ENCODE measurements at regions of chr9 and their contacts with region 1.

Region 1: DNA sequence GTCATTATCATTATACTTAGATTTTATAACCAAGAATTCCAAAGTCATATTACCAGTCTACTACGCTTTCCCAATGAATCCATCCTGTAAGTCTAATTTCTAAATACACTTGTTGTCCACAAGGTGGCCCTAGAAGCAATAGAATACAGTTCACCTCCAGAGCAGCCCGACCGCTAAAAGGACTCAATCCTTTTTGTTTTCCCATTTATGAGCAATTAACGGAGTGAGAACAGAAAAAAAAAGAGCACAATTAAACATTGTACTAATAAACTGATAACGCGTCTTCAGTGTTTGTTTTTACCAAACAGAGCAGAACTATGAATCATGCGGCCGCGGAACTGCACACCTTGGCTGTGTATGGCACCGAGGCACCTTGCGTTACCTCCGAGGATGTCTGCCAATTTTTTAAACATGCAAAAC is 160.7 kb upstream of the DAPK1 start:
- DNase-seq: peak; percentile 10
- ATAC-seq: peak; percentile 78; the same call in 1 of the 2 replicates
- H3K4me3 ChIP-seq: peak overlapping the region; percentile 13 to 14; a peak in 2 of 4 replicates
- H3K27ac ChIP-seq: no peak overlapping the region
- H3K4me1 ChIP-seq: no peaks in the 10 kb centered on the region
- H3K27me3 ChIP-seq: no peaks in the 10 kb centered on the region; the same call in 1 of the 2 replicates
- CTCF ChIP-seq: peak; percentile 60

Region 2: DNA sequence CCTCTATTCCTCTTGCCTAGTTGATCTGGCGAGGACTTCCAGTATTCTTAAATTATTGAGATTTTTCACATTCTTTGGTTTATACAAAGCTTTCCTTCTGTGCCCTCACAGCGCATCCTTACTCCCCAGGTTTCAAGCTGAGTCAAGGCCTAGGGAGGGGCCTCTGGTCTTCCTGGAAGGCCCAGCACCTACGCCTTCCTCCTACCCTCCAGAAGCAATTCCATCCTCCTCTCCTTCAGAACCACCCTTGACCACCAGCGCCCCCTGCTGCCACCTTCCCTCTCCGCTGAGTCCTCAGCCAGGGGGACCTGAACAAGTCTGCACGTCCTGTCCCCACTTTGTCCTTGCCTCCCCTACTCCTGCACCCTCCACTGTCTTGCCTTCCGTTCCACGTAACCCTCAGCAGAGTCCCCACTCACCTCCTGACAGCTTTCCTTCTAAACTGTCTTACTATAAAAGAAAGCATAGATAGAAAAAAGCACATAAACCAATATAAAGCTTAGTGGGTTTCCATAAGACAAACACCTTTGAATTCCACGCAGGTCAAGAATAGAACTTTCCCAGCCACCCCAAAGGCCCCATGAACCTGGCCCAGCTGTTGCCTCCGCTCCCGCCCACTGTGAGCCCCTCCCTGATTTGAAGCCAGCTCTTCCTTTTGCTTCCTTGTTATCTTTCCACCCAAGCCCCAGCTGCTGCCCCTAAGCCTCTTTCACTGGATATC is 326.0 kb after region 1 on chr9:
- CTCF ChIA-PET with region 1: no interaction called
- POLR2A ChIA-PET with region 1: no interaction called
- in situ Hi-C with region 1: no loop called
- intact Hi-C with region 1: loop called (anchors 1 kb)
- DNase-seq: no peak
- ATAC-seq: peak; percentile 88
- H3K4me3 ChIP-seq: no peak overlapping the region
- H3K27ac ChIP-seq: no peak overlapping the region
- H3K4me1 ChIP-seq: no peaks in the 10 kb centered on the region
- H3K27me3 ChIP-seq: no peaks in the 10 kb centered on the region
- CTCF ChIP-seq: peak; percentile 84

Region 3: DNA sequence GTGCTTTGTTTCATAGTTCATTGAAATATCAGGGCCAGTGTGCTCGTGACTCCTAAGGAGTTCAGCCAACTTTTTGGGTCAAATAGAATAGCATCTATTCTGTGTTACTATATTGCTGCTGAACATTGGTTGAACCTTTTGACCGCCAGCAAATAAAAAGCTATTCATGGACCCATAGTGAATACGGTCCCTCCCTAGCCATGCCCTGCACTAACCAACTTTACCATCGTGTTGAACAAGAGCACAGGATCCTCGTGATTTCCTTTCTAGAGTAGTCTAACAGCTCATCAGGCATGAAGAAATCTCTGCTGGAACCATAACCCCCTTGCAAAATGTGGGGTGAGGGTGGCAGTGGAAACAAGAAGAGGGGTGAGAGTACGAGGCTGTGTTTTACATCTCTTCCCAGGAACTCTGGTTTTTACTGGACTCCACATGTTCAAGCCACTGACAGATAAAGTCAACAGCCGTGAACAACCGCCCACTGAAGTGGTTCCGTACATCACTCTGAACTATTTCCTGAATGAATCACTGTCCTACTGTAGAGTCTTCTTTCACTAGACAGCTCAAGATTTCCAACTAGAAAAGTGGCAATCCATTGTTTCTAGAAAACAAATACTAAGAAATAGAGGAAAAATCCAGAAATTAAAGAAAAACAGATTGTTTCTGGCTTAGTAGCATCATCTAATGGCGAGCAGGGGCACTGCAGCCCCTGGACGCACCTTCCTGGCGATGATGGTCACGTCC is 475.6 kb after region 1 on chr9:
- CTCF ChIA-PET with region 1: no interaction called
- POLR2A ChIA-PET with region 1: no interaction called
- in situ Hi-C with region 1: no loop called
- intact Hi-C with region 1: loop called (anchors 5 kb)
- DNase-seq: no peak
- ATAC-seq: no peak
- H3K4me3 ChIP-seq: no peak overlapping the region
- H3K27ac ChIP-seq: no peak overlapping the region
- H3K4me1 ChIP-seq: no peaks in the 10 kb centered on the region
- H3K27me3 ChIP-seq: no peaks in the 10 kb centered on the region
- CTCF ChIP-seq: peak; percentile 93

Measured in Panc1 (cell line).